ENCODE measurements at regions of chr9 and their contacts with region 1.

Region 1: GRCh38 chr9:136885950-136886578 is at the start of gene TRAF2:
- DNase-seq: peak; percentile 98
- ATAC-seq: peak; percentile 92
- H3K4me3 Mint-ChIP-seq: peak within 1 kb of the TSS; percentile 99
- H3K27ac Mint-ChIP-seq: peak within 1 kb of the TSS; percentile 88
- H3K4me1 Mint-ChIP-seq: peaks cover 34% of the 10 kb centered on the region
- H3K27me3 Mint-ChIP-seq: no peaks in the 10 kb centered on the region
- total RNA-seq, gene TRAF2: 44.0 to 52.1 TPM

Region 2: GRCh38 chr9:136849038-136849959 is 36.8 kb before region 1 on chr9 and contains the start of gene PHPT1:
- POLR2A ChIA-PET with region 1: interaction called, 29 read pairs
- DNase-seq: peak; percentile 97
- ATAC-seq: peak; percentile 89
- H3K4me3 Mint-ChIP-seq: peak within 1 kb of the TSS; percentile 96
- H3K27ac Mint-ChIP-seq: peak within 1 kb of the TSS; percentile 92
- H3K4me1 Mint-ChIP-seq: peaks cover 5% of the 10 kb centered on the region
- H3K27me3 Mint-ChIP-seq: peaks cover 10% of the 10 kb centered on the region
- total RNA-seq, gene PHPT1: 80.5 to 89.0 TPM

Region 3: DNA sequence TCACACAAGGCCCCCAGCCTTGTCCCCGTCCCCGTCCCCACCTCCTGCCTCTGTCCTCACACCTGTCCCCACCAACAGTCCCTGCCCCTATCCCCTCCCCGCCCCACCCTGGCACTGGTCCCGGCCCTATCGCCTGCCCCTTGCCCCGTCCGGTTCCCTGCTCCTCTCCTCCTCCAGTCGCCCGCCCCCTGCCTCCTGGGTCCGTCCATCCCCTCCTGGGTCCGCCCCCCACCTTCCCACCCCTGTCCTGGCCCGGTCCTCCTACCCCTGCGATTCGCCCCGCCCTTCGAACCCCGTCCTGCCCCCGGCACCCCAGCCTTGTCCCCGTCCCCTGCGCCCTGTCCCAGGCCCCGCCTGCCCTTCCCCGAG is 20.3 kb before region 1 on chr9:
- POLR2A ChIA-PET with region 1: interaction called, 10 read pairs
- DNase-seq: no peak
- ATAC-seq: peak; percentile 12
- H3K4me3 Mint-ChIP-seq: peak overlapping the region; percentile 90
- H3K27ac Mint-ChIP-seq: peak overlapping the region; percentile 85
- H3K4me1 Mint-ChIP-seq: peaks cover 14% of the 10 kb centered on the region
- H3K27me3 Mint-ChIP-seq: no peaks in the 10 kb centered on the region

Region 4: DNA sequence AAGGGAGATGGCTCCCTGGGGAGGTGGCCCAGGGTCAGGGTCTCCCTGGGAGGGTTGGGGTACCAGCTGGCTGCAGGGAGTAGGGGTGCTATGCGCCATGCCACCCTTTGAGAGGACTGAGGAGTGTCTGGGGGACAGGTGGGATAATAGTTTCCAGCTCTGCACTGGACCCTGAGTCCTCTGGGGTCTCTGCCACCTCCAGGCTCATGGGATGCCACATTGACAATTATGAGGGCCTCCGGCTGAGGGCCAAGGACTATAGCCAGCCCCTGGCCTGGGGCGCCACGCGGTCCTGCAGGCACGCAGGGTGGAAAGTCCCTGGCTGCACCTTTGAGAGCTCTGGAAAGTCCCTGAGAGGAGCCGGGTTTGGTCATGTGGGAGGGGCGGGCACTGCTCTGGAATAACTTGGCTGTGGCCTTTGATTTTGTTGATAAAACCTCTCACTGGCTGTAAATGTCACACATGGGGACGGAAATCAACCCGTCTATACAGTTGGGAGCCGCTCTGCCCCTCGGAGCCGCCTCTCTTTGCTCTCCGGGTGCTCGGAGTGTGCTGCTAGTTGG is 16.3 kb after region 1 on chr9:
- POLR2A ChIA-PET with region 1: interaction called, 38 read pairs
- DNase-seq: peak; percentile 62
- ATAC-seq: peak; percentile 61
- H3K4me3 Mint-ChIP-seq: peak overlapping the region; percentile 54
- H3K27ac Mint-ChIP-seq: peak overlapping the region; percentile 87
- H3K4me1 Mint-ChIP-seq: peaks cover 34% of the 10 kb centered on the region
- H3K27me3 Mint-ChIP-seq: no peaks in the 10 kb centered on the region

Region 5: GRCh38 chr9:136928591-136928990 is 42.5 kb after region 1 on chr9:
- POLR2A ChIA-PET with region 1: no interaction called
- DNase-seq: no peak
- ATAC-seq: no peak
- H3K4me3 Mint-ChIP-seq: no peak overlapping the region
- H3K27ac Mint-ChIP-seq: no peak overlapping the region
- H3K4me1 Mint-ChIP-seq: no peaks in the 10 kb centered on the region
- H3K27me3 Mint-ChIP-seq: no peaks in the 10 kb centered on the region